OCI-LY7 (cell line): ENCODE measurements at regions of chr9 and their contacts with region 1.

Region 1: GRCh38 chr9:76773036-76773435 is 8.8 kb downstream of the PCA3 start:
- DNase-seq: no peak
- H3K4me3 ChIP-seq: no peak overlapping the region
- H3K27ac ChIP-seq: no peak overlapping the region
- H3K4me1 ChIP-seq: no peaks in the 10 kb centered on the region
- CTCF ChIP-seq: no peak

Region 2: GRCh38 chr9:76737154-76737902 is 35.7 kb before region 1 on chr9:
- CTCF ChIA-PET with region 1: no interaction called
- POLR2A ChIA-PET with region 1: no interaction called
- intact Hi-C with region 1: loop called (anchors 2 kb)
- DNase-seq: no peak
- H3K4me3 ChIP-seq: no peak overlapping the region
- H3K27ac ChIP-seq: no peak overlapping the region
- H3K4me1 ChIP-seq: no peaks in the 10 kb centered on the region
- CTCF ChIP-seq: no peak